K562 (cell line): ENCODE measurements at regions of chr16 and their contacts with region 1.

Region 1: DNA sequence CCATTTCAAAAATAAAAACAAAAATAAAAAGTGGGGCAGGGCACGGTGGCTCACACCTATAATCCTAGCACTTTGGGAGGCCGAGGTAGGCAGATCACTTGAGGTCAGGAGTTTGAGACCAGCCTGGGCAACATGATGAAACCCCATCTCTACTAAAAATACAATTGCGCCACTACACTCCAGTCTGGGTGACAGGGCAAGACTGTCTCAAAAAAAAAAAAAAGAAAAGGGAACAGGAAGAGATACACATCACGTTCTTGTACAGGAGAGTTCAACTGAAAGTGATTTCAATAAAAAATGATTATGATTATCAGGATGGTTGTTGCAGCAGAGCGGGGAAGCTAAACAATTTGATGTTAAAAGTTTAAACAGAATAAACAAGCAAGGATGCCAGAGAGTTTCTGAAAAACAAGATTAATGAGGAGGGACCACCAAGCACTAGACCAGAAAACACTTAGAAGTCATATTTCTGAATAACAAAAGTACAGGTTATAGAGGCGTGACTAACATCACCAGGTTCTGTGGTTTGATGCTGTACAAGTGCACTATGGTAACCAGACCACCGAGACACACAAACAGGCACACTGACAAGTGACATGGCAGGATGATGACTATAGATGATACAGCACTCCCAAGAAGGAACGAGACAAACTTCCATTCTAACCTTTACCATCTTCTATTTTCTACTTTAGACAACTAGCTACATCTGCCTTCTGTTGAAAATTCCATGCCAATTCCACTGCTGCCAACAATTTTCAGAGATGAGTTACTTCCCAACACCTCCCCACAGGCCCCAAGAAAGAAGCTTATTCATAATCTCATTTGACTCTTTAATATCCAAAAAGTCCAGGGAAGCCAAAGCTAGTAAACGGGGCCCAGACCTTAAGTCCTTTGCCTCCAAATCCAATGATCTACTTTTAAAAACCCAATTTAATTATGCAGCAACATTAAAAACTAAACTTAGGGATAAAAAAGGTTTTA is 11.8 kb downstream of the DNAJA2 start:
- DNase-seq: no peak
- ATAC-seq: no peak
- H3K4me3 ChIP-seq: no peak overlapping the region
- H3K27ac ChIP-seq: no peak overlapping the region
- H3K4me1 ChIP-seq: no peaks in the 10 kb centered on the region
- H3K27me3 ChIP-seq: no peaks in the 10 kb centered on the region
- CTCF ChIP-seq: no peak
- EP300 ChIP-seq: no peak
- POLR2A ChIP-seq: no peak
- RAD21 ChIP-seq: no peak

Region 2: GRCh38 chr16:46973207-46973995 is 11.7 kb after region 1 on chr16 and contains the start of gene DNAJA2:
- CTCF ChIA-PET with region 1: interaction called, 4 read pairs
- POLR2A ChIA-PET with region 1: interaction called, 14 read pairs
- in situ Hi-C with region 1: no loop called
- intact Hi-C with region 1: no loop called
- DNase-seq: peak; percentile 90 to 94 (median 92)
- ATAC-seq: peak; percentile 96
- H3K4me3 ChIP-seq: peak within 1 kb of the TSS; percentile 95
- H3K27ac ChIP-seq: peak within 1 kb of the TSS; percentile 83
- H3K4me1 ChIP-seq: peaks cover 13% of the 10 kb centered on the region in 2 experiments; a peak in 4 of 5 replicates
- H3K27me3 ChIP-seq: no peaks in the 10 kb centered on the region
- CTCF ChIP-seq: no peak
- EP300 ChIP-seq: no peak
- POLR2A ChIP-seq: peak; percentile 90
- RAD21 ChIP-seq: no peak
- polyA plus RNA-seq, gene DNAJA2: 31.6 to 38.2 TPM